Activated B cell treated with CpG ODN at 0.5 μM for 24 hours (primary cell): ENCODE measurements at regions of chr11 and their contacts with region 1.

Region 1: DNA sequence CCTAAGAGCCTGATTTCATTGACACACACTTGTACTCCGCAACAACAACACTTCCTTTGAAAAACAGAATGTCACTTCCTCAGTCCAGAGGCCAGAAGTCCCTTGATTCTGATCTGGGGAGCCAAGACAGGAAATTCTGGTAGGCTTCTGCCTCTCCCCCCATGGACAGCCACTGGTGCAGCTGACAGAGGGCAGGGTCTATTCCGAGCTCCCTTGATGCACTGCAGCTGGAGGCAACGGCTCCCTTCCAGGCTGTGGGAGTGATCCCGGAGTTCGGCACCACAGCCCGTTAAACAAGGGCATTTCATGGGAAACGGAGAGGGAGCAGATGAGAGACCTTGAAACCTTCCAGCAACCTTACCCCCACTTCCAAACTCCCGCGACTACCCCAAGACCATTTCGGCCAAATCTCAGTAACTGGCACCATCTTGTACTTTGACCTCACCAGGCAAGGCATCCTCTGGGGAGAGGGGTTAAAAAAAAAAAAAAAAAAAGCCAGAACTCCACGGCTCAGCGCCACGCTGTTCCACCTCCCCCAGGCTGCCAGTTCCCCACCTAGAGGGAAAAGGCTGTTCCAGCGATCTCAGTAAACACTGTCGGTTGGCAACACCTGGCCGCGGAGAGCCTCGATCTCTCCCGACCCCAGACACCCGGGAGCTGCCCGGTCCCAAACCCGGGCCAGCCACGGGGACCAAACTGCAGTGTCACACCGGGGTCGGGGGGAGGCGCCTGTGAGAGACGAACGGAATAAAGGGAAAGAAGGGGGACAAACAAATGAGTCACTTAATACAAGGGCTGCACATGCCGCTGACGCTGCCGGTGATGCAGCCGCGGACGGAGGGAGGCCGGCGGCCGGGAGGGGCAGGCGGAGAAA is 1.1 kb downstream of the GAB2 start:
- DNase-seq: peak; percentile 71
- ATAC-seq: peak; percentile 51
- H3K4me3 Mint-ChIP-seq: peak overlapping the region; percentile 98
- H3K27ac Mint-ChIP-seq: peak overlapping the region; percentile 96
- H3K4me1 Mint-ChIP-seq: peaks cover 79% of the 10 kb centered on the region
- H3K27me3 Mint-ChIP-seq: no peaks in the 10 kb centered on the region
- CTCF ChIP-seq: no peak

Region 2: GRCh38 chr11:78139422-78140391 is 276.8 kb before region 1 on chr11 and contains the start of gene ALG8:
- CTCF ChIA-PET with region 1: no interaction called
- POLR2A ChIA-PET with region 1: interaction called, 7 read pairs
- intact Hi-C with region 1: loop called (anchors 2 kb)
- DNase-seq: peak; percentile 94
- ATAC-seq: peak; percentile 94
- H3K4me3 Mint-ChIP-seq: peak within 1 kb of the TSS; percentile 95
- H3K27ac Mint-ChIP-seq: peak within 1 kb of the TSS; percentile 92
- H3K4me1 Mint-ChIP-seq: peaks cover 49% of the 10 kb centered on the region
- H3K27me3 Mint-ChIP-seq: no peaks in the 10 kb centered on the region
- CTCF ChIP-seq: no peak
- total RNA-seq, gene ALG8: 42.8 and 46.0 TPM in 2 replicates

Region 3: GRCh38 chr11:78310500-78310909 is 106.0 kb before region 1 on chr11:
- CTCF ChIA-PET with region 1: interaction called, 4 read pairs
- POLR2A ChIA-PET with region 1: interaction called, 7 read pairs
- intact Hi-C with region 1: loop called (anchors 5 kb)
- DNase-seq: no peak
- ATAC-seq: peak; percentile 66
- H3K4me3 Mint-ChIP-seq: peak overlapping the region; percentile 52
- H3K27ac Mint-ChIP-seq: peak overlapping the region; percentile 86
- H3K4me1 Mint-ChIP-seq: peaks cover 61% of the 10 kb centered on the region
- H3K27me3 Mint-ChIP-seq: no peaks in the 10 kb centered on the region
- CTCF ChIP-seq: no peak

Region 4: DNA sequence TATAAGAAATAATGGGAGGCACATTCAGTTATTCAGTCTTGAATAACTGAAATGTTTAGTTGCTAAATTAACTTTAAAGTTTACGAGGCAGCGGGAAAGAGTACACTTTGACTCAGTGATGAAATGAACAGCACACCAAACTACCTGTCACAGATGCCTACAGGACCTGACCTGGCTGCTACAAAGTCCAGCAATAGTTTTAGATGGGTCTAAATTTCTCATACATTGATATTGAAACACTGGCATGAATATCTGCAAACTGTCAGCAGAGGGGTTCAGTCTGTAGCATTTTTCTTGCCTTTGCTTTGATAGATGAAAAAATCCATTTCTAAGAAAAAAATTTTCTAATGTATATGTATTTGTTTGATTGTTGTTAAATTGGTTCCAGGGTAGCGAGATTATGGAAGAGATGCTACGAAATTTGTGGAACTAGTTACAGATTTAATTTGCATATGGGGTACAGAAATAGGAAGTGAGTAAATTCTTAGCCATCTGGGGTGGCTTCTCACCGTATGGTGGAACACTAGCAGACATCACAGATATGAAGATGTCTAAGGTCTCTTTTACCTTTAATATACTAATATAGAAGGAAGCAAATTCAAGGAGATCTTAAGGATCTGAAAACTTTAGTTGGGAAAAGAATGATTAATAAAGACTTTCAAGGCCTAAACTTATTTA is 21.9 kb after region 1 on chr11:
- CTCF ChIA-PET with region 1: interaction called, 3 read pairs
- POLR2A ChIA-PET with region 1: interaction called, 4 read pairs
- intact Hi-C with region 1: loop called (anchors 2 kb)
- DNase-seq: no peak
- ATAC-seq: peak; percentile 92
- H3K4me3 Mint-ChIP-seq: peak overlapping the region; percentile 24
- H3K27ac Mint-ChIP-seq: peak overlapping the region; percentile 51
- H3K4me1 Mint-ChIP-seq: peaks cover 27% of the 10 kb centered on the region
- H3K27me3 Mint-ChIP-seq: no peaks in the 10 kb centered on the region
- CTCF ChIP-seq: no peak

Region 5: GRCh38 chr11:78533399-78533798 is 116.9 kb after region 1 on chr11:
- CTCF ChIA-PET with region 1: interaction called, 3 read pairs
- POLR2A ChIA-PET with region 1: interaction called, 6 read pairs
- intact Hi-C with region 1: loop called (anchors 10 kb)
- DNase-seq: no peak
- ATAC-seq: peak; percentile 67
- H3K4me3 Mint-ChIP-seq: peak overlapping the region; percentile 58
- H3K27ac Mint-ChIP-seq: peak overlapping the region; percentile 96
- H3K4me1 Mint-ChIP-seq: peaks cover 36% of the 10 kb centered on the region
- H3K27me3 Mint-ChIP-seq: no peaks in the 10 kb centered on the region
- CTCF ChIP-seq: no peak